ENCODE measurements at regions of chr20 and their contacts with region 1.

Region 1: GRCh38 chr20:17504898-17505635 is 26.1 kb downstream of the BFSP1 start:
- DNase-seq: peak; percentile 64
- H3K4me3 ChIP-seq: peak overlapping the region; percentile 27 to 33 (median 28)
- H3K27ac ChIP-seq: peak overlapping the region; percentile 93
- H3K4me1 ChIP-seq: peaks cover 21% of the 10 kb centered on the region
- H3K27me3 ChIP-seq: no peaks in the 10 kb centered on the region
- CTCF ChIP-seq: peak; percentile 46 to 67

Region 2: GRCh38 chr20:16801919-16802911 is 702.9 kb before region 1 on chr20:
- CTCF ChIA-PET with region 1: no interaction called
- dilution Hi-C with region 1: no loop called
- in situ Hi-C with region 1: no loop called
- intact Hi-C with region 1: loop called (anchors 2 kb)
- DNase-seq: peak; percentile 9
- H3K4me3 ChIP-seq: no peak overlapping the region
- H3K27ac ChIP-seq: no peak overlapping the region
- H3K4me1 ChIP-seq: no peaks in the 10 kb centered on the region
- H3K27me3 ChIP-seq: peaks cover 2% of the 10 kb centered on the region
- CTCF ChIP-seq: peak; percentile 88 to 96

Region 3: GRCh38 chr20:17569616-17570346 is 64.7 kb after region 1 on chr20 and contains the start of gene DSTN:
- CTCF ChIA-PET with region 1: no interaction called
- dilution Hi-C with region 1: loop called (anchors 5 kb)
- in situ Hi-C with region 1: no loop called
- intact Hi-C with region 1: loop called (anchors 1 kb)
- DNase-seq: peak; percentile 95
- H3K4me3 ChIP-seq: peak within 1 kb of the TSS; percentile 95 to 99 (median 95)
- H3K27ac ChIP-seq: peak within 1 kb of the TSS; percentile 97
- H3K4me1 ChIP-seq: peaks cover 38% of the 10 kb centered on the region
- H3K27me3 ChIP-seq: no peaks in the 10 kb centered on the region
- CTCF ChIP-seq: no peak
- total RNA-seq, gene DSTN: 398 to 428 TPM

Region 4: GRCh38 chr20:17636523-17637412 is 131.7 kb after region 1 on chr20:
- CTCF ChIA-PET with region 1: no interaction called
- dilution Hi-C with region 1: loop called (anchors 5 kb)
- in situ Hi-C with region 1: no loop called
- intact Hi-C with region 1: no loop called
- DNase-seq: no peak
- H3K4me3 ChIP-seq: no peak overlapping the region
- H3K27ac ChIP-seq: no peak overlapping the region
- H3K4me1 ChIP-seq: no peaks in the 10 kb centered on the region
- H3K27me3 ChIP-seq: no peaks in the 10 kb centered on the region
- CTCF ChIP-seq: no peak

Region 5: DNA sequence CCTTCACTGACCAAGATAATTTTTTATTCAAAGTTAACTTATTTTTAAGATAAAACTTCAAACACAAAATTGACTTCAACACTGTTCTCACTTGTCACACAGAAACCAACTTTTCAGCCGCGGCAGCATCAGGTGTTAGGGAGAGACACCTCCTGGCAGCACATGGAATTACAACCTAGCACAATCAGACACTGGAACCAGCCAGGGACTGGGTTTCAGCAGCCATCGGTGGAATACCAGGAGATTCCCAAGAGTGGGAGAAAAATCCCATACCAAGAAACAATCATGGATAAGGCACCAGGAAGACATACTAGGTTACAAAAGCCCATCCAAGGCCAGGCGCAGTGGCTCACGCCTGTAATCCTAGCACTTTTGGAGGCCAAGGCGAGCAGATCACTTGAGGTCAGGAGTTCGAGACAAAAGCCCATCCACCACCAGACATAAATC is 393.5 kb after region 1 on chr20:
- CTCF ChIA-PET with region 1: no interaction called
- dilution Hi-C with region 1: no loop called
- in situ Hi-C with region 1: loop called in 1 of 2 experiments (anchors 10 kb)
- intact Hi-C with region 1: loop called (anchors 1 kb)
- DNase-seq: peak; percentile 53
- H3K4me3 ChIP-seq: no peak overlapping the region
- H3K27ac ChIP-seq: no peak overlapping the region
- H3K4me1 ChIP-seq: peaks cover 34% of the 10 kb centered on the region
- H3K27me3 ChIP-seq: no peaks in the 10 kb centered on the region
- CTCF ChIP-seq: peak; percentile 85 to 96

Region 6: GRCh38 chr20:17968366-17969279 is 463.6 kb after region 1 on chr20 and contains the starts of genes MGME1 and SNX5:
- CTCF ChIA-PET with region 1: no interaction called
- dilution Hi-C with region 1: no loop called
- in situ Hi-C with region 1: loop called in 1 of 2 experiments (anchors 25 kb)
- intact Hi-C with region 1: no loop called
- DNase-seq: peak; percentile 99
- H3K4me3 ChIP-seq: peak within 1 kb of the TSS; percentile 88 to 93 (median 91)
- H3K27ac ChIP-seq: peak within 1 kb of the TSS; percentile 98
- H3K4me1 ChIP-seq: peaks cover 26% of the 10 kb centered on the region
- H3K27me3 ChIP-seq: no peaks in the 10 kb centered on the region
- CTCF ChIP-seq: no peak
- total RNA-seq, gene MGME1: 15.8 to 36.2 TPM
- total RNA-seq, gene SNX5: 68.0 to 137 TPM

Region 7: GRCh38 chr20:18276821-18277220 is 771.8 kb after region 1 on chr20:
- CTCF ChIA-PET with region 1: no interaction called
- dilution Hi-C with region 1: no loop called
- in situ Hi-C with region 1: no loop called
- intact Hi-C with region 1: loop called (anchors 5 kb)
- DNase-seq: peak; percentile 73
- H3K4me3 ChIP-seq: no peak overlapping the region
- H3K27ac ChIP-seq: no peak overlapping the region
- H3K4me1 ChIP-seq: peaks cover 3% of the 10 kb centered on the region
- H3K27me3 ChIP-seq: no peaks in the 10 kb centered on the region
- CTCF ChIP-seq: peak; percentile 95 to 96